ENCODE measurements at regions of chr9 and their contacts with region 1.

Region 1: DNA sequence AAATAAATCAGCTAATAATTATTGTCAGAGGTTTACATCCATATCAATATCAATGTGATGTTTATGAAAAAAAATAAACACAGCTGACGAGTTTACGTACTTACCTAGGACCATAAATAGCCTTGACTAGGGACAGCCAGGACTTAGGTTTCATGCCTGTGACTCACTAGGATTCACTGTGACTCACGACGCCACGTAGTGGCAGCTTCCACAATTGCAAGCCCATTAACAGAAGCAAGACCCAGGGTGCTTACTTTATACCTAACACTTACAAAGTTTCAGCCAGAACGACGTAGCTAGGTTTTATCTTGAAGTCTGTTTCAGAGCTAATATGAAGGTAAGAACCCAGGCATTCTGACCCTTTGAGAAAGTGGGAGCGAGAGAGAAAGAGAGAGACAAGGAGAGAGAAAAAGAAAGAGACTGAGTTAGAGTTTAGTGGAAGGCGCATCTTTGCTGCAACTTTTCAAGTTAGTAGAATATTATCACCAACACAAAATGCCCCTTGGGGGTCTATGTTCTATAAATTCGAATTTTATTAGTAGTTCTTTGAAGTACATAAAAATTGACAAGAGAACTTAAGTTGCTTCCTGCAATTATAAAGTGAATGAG is 191.2 kb downstream of the GNA14 start:
- DNase-seq: peak; percentile 93
- H3K4me3 ChIP-seq: no peak overlapping the region
- H3K27ac ChIP-seq: no peak overlapping the region
- H3K4me1 ChIP-seq: no peaks in the 10 kb centered on the region
- H3K27me3 ChIP-seq: no peaks in the 10 kb centered on the region
- CTCF ChIP-seq: peak; percentile 98

Region 2: GRCh38 chr9:77384406-77384805 is 72.5 kb before region 1 on chr9:
- intact Hi-C with region 1: no loop called
- DNase-seq: no peak
- H3K4me3 ChIP-seq: no peak overlapping the region
- H3K27ac ChIP-seq: no peak overlapping the region
- H3K4me1 ChIP-seq: no peaks in the 10 kb centered on the region
- H3K27me3 ChIP-seq: no peaks in the 10 kb centered on the region
- CTCF ChIP-seq: no peak

Region 3: DNA sequence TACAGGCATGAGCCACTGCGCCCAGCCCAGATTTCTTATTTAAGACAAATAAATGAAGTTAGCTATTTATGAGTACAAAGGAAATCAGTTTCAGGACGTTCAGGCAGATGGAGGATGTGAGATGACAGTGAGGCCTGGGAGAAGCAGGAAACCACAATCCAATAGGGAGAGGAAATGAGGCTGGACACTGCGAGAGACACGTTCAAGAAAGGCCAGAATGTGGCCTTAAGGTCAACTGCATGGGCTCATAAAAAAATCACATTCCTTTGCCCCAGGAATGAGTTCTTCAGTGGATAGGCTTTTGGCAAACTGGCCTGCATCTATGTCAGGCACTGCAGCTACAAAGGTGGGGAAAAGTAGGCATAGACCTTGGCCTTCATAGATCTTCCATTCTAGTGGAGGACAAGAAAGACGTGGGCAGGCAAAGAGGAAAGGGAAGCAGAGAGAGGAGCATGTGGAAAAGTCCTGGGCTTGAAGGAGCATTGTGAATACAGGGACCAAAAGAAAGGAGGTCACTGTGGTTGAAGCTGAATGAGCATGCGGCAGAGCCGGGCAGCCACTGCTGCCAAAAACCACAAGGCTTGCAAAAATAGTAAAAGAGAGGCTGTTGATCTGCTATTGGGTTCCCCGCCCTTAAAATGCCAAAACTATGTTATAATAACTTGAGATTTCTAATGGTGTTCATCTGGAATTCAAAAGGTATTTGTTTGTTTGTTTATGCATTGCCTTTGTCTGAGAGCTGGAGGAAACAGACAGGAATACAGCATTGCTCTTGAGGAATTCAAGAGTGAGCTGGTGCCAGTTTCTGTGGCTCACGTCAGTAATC is 58.2 kb after region 1 on chr9:
- intact Hi-C with region 1: no loop called
- DNase-seq: no peak
- H3K4me3 ChIP-seq: no peak overlapping the region
- H3K27ac ChIP-seq: no peak overlapping the region
- H3K4me1 ChIP-seq: no peaks in the 10 kb centered on the region
- H3K27me3 ChIP-seq: no peaks in the 10 kb centered on the region
- CTCF ChIP-seq: no peak

Region 4: DNA sequence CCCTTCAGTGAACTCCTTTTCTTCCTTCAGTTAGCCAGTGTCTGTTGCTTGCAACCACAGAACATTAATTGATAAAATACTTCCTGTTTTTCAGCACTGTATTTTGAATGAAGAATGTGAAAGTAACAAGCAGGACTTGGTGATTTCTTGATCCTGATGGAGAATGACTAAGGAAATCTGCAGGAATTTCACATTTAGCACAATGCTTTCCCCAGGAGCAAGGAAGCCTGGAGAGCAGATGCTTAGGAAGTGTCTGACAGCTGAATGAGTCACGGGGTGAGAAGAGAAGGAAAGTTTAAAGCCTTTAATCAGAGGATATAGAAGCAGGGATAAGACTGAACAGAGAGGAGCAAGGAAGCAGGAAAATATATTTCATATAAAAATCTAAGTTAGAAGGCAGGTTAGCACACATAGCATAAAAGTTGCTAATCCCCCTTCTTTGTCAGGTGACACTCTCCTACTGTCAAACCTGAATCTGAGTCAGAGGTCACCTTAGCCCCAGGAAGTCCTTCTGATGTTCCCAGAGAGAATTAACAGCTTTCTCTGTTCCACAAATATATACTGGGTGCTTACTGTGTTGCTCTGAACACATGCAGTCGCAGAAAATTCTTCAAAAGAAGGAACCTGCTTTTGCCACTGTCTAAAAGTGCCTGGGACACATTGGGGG is 131.5 kb after region 1 on chr9:
- intact Hi-C with region 1: no loop called
- DNase-seq: no peak
- H3K4me3 ChIP-seq: no peak overlapping the region
- H3K27ac ChIP-seq: peak overlapping the region; percentile 87
- H3K4me1 ChIP-seq: peaks cover 2% of the 10 kb centered on the region
- H3K27me3 ChIP-seq: no peaks in the 10 kb centered on the region
- CTCF ChIP-seq: no peak

Region 5: GRCh38 chr9:77648234-77649120 is 191.5 kb after region 1 on chr9 and contains the start of gene GNA14:
- intact Hi-C with region 1: loop called (anchors 5 kb)
- DNase-seq: peak; percentile 79
- H3K4me3 ChIP-seq: peak within 1 kb of the TSS; percentile 46
- H3K27ac ChIP-seq: peak within 1 kb of the TSS; percentile 60
- H3K4me1 ChIP-seq: no peaks in the 10 kb centered on the region
- H3K27me3 ChIP-seq: no peaks in the 10 kb centered on the region
- CTCF ChIP-seq: no peak
- total RNA-seq, gene GNA14: 7.9 to 11.7 TPM

Region 6: GRCh38 chr9:77751341-77752091 is 294.6 kb after region 1 on chr9:
- intact Hi-C with region 1: loop called (anchors 10 kb)
- DNase-seq: peak; percentile 57
- H3K4me3 ChIP-seq: no peak overlapping the region
- H3K27ac ChIP-seq: no peak overlapping the region
- H3K4me1 ChIP-seq: no peaks in the 10 kb centered on the region
- H3K27me3 ChIP-seq: no peaks in the 10 kb centered on the region
- CTCF ChIP-seq: peak; percentile 41

Region 7: GRCh38 chr9:78053627-78054026 is 596.7 kb after region 1 on chr9:
- intact Hi-C with region 1: no loop called
- DNase-seq: no peak
- H3K4me3 ChIP-seq: no peak overlapping the region
- H3K27ac ChIP-seq: no peak overlapping the region
- H3K4me1 ChIP-seq: no peaks in the 10 kb centered on the region
- H3K27me3 ChIP-seq: no peaks in the 10 kb centered on the region
- CTCF ChIP-seq: no peak